A549 (cell line): ENCODE measurements at regions of chr17 and their contacts with region 1.

Region 1: GRCh38 chr17:75430159-75430974 is 24.9 kb upstream of the GRB2 start:
- DNase-seq: peak; percentile 90 to 91
- ATAC-seq: peak; percentile 66 to 84; a peak in 5 of 6 replicates
- H3K4me3 ChIP-seq: peak overlapping the region; percentile 17; the same call in 2 of the 3 replicates
- H3K27ac ChIP-seq: peak overlapping the region; percentile 80 to 89
- H3K4me1 ChIP-seq: peaks cover 35% of the 10 kb centered on the region
- CTCF ChIP-seq: no peak
- EP300 ChIP-seq: no peak
- POLR2A ChIP-seq: 0 out of 2 replicates have a peak, but pooled peaks have one; percentile 15
- RAD21 ChIP-seq: no peak

Region 2: DNA sequence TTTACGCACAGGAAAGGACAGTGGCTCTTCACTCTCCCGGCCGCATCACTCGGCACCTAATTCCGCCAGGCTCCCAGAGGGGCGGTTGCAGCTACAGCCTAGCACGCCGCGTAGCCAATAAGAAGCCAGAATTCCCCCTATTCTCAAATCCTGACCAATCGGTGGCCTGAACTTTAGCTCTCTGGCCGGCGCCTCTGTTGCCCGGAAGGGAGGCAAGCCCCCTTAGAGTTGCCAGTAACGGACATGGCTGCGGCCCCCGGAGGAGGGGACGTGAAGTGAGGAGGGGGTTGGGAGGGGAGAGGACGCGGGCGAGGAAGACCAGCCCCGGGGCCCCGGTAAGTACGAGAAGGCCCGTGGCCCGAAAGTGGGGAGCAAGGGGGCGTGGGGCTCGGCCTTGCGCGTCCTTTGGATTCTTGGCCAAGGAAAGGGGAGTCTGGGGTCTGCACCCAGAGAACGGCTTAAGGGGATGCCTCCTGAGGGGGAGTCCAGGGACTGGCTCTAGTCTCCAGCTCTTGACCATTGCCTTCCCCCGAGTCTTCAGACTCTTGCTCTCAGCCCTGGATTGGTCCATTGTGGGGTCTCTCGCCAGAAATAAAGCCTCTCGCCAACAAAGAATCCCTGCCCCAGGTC is 26.2 kb after region 1 on chr17 and contains the start of gene TMEM94:
- CTCF ChIA-PET with region 1: interaction called, 6 read pairs
- POLR2A ChIA-PET with region 1: interaction called, 30 read pairs
- DNase-seq: peak; percentile 96 to 99
- ATAC-seq: peak; percentile 98 to 99
- H3K4me3 ChIP-seq: peak within 1 kb of the TSS; percentile 91
- H3K27ac ChIP-seq: peak within 1 kb of the TSS; percentile 92 to 95
- H3K4me1 ChIP-seq: peaks cover 23% of the 10 kb centered on the region
- CTCF ChIP-seq: no peak
- EP300 ChIP-seq: no peak
- POLR2A ChIP-seq: peak; percentile 55
- RAD21 ChIP-seq: no peak
- polyA plus RNA-seq, gene TMEM94: 30.5 and 42.7 TPM in 2 replicates

Region 3: DNA sequence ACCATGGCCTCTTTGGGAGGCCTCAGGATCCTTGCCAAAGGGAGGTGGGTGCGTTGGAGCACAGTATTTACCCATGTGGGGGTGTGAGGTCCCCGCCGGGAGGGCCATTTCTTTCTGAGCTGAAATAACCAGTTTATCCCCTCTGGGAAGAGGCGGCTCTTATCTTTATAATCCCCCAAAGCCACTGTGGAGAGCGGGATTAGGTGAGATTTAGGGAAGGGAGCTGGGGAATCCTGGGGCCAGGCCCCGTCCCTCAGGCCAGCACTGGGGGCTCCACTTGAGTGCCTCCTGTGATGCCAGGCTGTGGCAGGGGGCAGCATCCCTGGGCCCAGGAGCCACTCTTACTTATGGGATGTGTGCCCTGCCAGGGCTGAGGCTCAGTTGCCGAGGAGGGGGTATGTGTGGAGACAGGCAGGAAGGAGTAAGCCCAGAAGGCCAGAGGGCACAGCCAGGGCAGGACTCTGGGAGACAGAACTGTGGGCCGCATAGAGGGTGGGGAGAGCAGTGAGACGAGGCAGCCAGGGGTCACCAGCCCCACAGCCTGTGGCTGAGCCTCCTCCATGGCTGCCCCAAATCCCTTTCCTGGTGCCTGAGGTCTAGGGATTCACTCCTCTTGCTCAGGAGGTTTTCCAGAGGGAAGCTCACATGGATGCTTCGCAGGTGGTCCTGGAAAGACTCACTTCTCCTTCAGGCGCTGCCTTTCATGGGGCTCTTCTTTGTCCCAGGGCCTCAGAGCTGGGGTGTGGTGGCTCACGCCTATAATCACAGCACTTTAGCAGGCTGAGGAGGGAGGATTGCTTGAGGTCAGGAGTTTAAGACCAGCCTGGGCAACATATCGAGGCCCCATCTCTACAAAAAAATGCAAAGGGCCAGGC is 51.1 kb after region 1 on chr17:
- CTCF ChIA-PET with region 1: interaction called, 11 read pairs
- POLR2A ChIA-PET with region 1: no interaction called
- DNase-seq: no peak
- ATAC-seq: peak in 1 of 2 experiments; percentile 24; a peak in 3 of 6 replicates
- H3K4me3 ChIP-seq: no peak overlapping the region
- H3K27ac ChIP-seq: peak overlapping the region in 1 of 2 experiments; percentile 9; a peak in 1 of 6 replicates
- H3K4me1 ChIP-seq: no peaks in the 10 kb centered on the region
- CTCF ChIP-seq: no peak
- EP300 ChIP-seq: no peak
- POLR2A ChIP-seq: no peak
- RAD21 ChIP-seq: no peak

Region 4: DNA sequence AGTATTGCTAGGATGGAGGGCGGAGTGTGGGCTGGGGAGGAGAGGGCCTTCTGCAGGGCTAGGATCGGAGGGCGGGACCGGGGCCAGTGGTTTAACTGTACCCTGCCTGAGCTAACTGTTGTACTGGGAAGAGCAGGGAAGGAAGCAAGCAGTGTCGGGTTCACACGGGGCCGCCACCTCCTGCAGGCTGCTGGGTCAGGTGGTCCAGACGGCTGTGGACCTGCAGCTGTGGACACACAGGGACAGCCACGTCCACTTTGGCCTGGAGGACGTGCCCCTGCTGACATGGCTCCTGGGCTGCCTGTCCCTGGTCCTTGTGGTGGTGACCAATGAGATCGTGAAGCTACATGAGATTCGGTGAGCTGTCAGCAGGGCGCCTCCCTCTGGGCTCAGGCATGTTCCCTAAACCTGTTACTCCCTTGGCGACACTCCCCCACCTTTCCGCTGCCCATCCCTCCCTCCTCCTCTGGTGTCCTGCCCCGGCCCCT is 68.4 kb after region 1 on chr17:
- CTCF ChIA-PET with region 1: interaction called, 41 read pairs
- POLR2A ChIA-PET with region 1: no interaction called
- DNase-seq: peak in 1 of 2 experiments; percentile 44
- ATAC-seq: peak; percentile 11 to 26; a peak in 2 of 6 replicates
- H3K4me3 ChIP-seq: no peak overlapping the region
- H3K27ac ChIP-seq: no peak overlapping the region
- H3K4me1 ChIP-seq: no peaks in the 10 kb centered on the region
- CTCF ChIP-seq: no peak; the same call in 2 of the 3 replicates
- EP300 ChIP-seq: no peak
- POLR2A ChIP-seq: no peak
- RAD21 ChIP-seq: no peak

Region 5: GRCh38 chr17:75524953-75525719 is 94.8 kb after region 1 on chr17 and contains the start of gene LLGL2:
- CTCF ChIA-PET with region 1: interaction called, 12 read pairs
- POLR2A ChIA-PET with region 1: no interaction called
- DNase-seq: peak; percentile 83 to 93
- ATAC-seq: peak; percentile 85 to 90
- H3K4me3 ChIP-seq: peak within 1 kb of the TSS; percentile 67
- H3K27ac ChIP-seq: peak within 1 kb of the TSS; percentile 83 to 88
- H3K4me1 ChIP-seq: peaks cover 21% of the 10 kb centered on the region
- CTCF ChIP-seq: peak; percentile 69
- EP300 ChIP-seq: no peak
- POLR2A ChIP-seq: no peak
- RAD21 ChIP-seq: peak; percentile 18 to 59; a peak in 4 of 5 replicates
- polyA plus RNA-seq, gene LLGL2: 18.9 and 20.7 TPM in 2 replicates